ENCODE measurements at regions of chr17 and their contacts with region 1.

Region 1: GRCh38 chr17:8843344-8843743 is 24.1 kb downstream of the PIK3R6 start:
- DNase-seq: no peak
- ATAC-seq: no peak
- H3K4me3 ChIP-seq: no peak overlapping the region
- H3K27ac ChIP-seq: no peak overlapping the region
- H3K4me1 ChIP-seq: no peaks in the 10 kb centered on the region
- CTCF ChIP-seq: no peak
- EP300 ChIP-seq: no peak
- POLR2A ChIP-seq: no peak
- RAD21 ChIP-seq: no peak

Region 2: DNA sequence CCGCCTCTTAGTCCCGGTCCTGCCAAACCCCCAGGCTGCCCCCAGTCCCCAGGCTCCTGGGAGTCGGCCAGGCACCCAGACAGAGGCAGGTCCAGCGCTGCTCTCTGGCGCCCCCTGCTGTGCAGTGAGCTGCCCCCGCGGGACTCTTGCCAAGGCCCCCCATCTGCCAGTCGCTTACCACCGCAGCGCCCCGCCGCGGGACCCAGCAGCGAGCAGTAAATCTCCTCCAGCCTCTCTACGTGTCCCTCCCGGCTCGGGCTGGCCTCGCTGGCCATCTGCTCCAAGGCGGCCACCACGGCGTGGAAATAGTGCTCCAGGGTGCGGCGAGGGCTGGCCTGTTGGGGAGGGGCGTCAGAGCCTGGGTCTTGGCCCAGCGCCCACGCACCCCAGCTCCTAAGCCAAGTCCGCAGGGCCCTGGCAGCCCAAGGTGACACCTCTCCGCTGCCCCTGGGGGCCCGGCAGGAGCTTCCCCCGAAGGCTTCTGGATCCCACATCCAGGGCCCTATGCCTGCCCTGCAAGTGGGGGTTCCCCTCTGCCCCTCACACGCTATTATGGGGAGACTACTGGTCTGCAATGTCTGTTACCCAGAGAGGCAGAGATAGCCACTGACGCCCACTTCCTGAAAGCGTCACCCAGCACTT is 10.5 kb before region 1 on chr17:
- CTCF ChIA-PET with region 1: interaction called, 30 read pairs
- POLR2A ChIA-PET with region 1: no interaction called
- DNase-seq: peak in 1 of 2 experiments; percentile 28
- ATAC-seq: peak in 1 of 2 experiments; percentile 68; a peak in 3 of 6 replicates
- H3K4me3 ChIP-seq: no peak overlapping the region
- H3K27ac ChIP-seq: no peak overlapping the region
- H3K4me1 ChIP-seq: no peaks in the 10 kb centered on the region
- CTCF ChIP-seq: peak; percentile 51
- EP300 ChIP-seq: no peak
- POLR2A ChIP-seq: no peak
- RAD21 ChIP-seq: peak; percentile 27 to 28; a peak in 2 of 5 replicates

Region 3: GRCh38 chr17:9064311-9064844 is 221.0 kb after region 1 on chr17:
- CTCF ChIA-PET with region 1: no interaction called
- POLR2A ChIA-PET with region 1: no interaction called
- DNase-seq: no peak
- ATAC-seq: no peak
- H3K4me3 ChIP-seq: no peak overlapping the region
- H3K27ac ChIP-seq: no peak overlapping the region
- H3K4me1 ChIP-seq: no peaks in the 10 kb centered on the region
- CTCF ChIP-seq: no peak
- EP300 ChIP-seq: no peak
- POLR2A ChIP-seq: no peak
- RAD21 ChIP-seq: no peak

Region 4: GRCh38 chr17:9187828-9188227 is 344.5 kb after region 1 on chr17:
- CTCF ChIA-PET with region 1: no interaction called
- POLR2A ChIA-PET with region 1: interaction called, 10 read pairs
- DNase-seq: no peak
- ATAC-seq: no peak
- H3K4me3 ChIP-seq: no peak overlapping the region
- H3K27ac ChIP-seq: no peak overlapping the region
- H3K4me1 ChIP-seq: no peaks in the 10 kb centered on the region
- CTCF ChIP-seq: no peak
- EP300 ChIP-seq: no peak
- POLR2A ChIP-seq: no peak
- RAD21 ChIP-seq: no peak

Measured in A549 (cell line).